Esophagus muscularis mucosa (tissue), 4 donors: ENCODE measurements at regions of chr7 and their contacts with region 1.

Region 1: DNA sequence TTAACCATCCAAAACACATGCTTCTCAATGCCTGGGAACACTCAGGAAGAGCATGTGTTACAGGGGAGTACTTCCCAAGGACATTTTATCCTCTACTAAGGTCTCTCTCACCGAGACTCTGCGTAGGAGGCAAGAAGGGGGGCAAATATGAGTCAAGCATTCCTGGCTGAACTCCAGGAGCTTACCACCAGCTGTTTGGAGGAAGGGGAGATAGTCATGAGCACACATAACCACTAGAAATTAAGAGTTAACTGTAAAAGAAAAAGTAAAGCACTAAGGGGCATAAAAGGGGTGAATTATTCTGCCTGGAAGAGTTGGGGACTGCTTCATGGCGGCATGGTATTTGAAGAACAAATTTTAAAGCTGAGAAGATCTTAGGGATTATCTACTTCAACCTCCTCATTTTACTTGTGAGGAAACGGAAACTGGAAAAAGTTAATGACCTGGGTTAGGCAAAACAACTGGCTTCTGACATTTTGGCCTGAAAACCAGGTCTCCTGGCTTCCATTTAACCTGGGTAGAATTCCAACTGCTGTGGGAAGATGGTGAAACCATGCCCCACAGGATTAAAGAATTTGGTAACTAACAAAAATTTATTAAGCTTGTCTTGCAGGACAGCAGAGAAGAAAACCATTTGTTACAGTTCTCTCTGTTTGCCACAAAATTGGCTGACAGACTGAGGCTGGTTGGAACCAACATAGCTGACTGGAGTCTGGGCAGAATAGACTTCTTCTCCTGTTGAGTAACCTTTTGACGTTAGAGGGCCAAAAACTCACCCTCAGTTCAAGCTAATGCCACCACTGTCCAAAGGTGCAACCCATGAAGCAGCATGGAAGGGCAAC is 85.5 kb downstream of the SLC25A13 start:
- DNase-seq: no peak
- H3K4me3 ChIP-seq: no peak overlapping the region
- H3K27ac ChIP-seq: peak overlapping the region; percentile 43 to 56 (median 52)
- H3K4me1 ChIP-seq: peaks cover 17 to 38% (median 34%) of the 10 kb centered on the region in 4 donors
- H3K27me3 ChIP-seq: no peaks in the 10 kb centered on the region
- CTCF ChIP-seq: no peak
- EP300 ChIP-seq: no peak
- POLR2A ChIP-seq: no peak

Region 2: DNA sequence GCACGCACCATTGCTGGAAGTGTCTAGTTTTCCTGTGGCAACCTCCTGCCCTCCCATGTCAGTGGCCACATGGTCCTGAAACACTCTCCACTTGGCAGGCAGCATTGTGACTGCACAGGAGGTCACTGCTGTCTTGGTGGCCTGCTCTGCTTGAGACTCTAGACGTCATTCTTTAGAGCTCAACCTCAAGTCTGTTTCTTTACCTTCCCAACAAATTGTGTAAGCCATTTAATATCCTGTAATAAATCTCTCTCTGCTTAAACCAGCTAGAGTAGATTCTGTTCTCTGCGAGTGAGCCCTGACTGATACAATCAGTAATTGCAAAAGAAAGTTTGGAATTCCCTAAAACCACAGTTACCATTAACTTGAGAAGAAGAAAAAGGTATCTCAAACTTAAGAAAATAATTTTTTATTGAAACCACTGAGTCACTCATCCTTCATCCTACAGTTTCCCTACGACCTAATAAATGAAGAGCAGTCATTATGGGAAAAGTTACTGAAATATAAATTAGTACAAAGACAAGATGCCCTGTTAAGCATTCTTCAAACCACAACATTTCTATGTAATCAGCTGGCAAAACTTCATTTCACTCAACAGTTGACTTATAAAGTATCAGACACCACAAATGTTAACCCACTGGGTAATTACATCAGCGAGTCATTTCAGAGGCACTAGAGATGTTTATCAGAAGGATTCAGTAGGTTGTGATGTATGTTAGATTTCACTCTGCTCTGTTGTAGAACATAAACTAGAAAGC is 67.4 kb after region 1 on chr7:
- intact Hi-C with region 1: no loop called
- DNase-seq: no peak
- H3K4me3 ChIP-seq: no peak overlapping the region
- H3K27ac ChIP-seq: no peak overlapping the region
- H3K4me1 ChIP-seq: peaks cover 4 to 54% (median 31%) of the 10 kb centered on the region in 4 donors
- H3K27me3 ChIP-seq: no peaks in the 10 kb centered on the region
- CTCF ChIP-seq: no peak
- EP300 ChIP-seq: no peak
- POLR2A ChIP-seq: no peak

Region 3: DNA sequence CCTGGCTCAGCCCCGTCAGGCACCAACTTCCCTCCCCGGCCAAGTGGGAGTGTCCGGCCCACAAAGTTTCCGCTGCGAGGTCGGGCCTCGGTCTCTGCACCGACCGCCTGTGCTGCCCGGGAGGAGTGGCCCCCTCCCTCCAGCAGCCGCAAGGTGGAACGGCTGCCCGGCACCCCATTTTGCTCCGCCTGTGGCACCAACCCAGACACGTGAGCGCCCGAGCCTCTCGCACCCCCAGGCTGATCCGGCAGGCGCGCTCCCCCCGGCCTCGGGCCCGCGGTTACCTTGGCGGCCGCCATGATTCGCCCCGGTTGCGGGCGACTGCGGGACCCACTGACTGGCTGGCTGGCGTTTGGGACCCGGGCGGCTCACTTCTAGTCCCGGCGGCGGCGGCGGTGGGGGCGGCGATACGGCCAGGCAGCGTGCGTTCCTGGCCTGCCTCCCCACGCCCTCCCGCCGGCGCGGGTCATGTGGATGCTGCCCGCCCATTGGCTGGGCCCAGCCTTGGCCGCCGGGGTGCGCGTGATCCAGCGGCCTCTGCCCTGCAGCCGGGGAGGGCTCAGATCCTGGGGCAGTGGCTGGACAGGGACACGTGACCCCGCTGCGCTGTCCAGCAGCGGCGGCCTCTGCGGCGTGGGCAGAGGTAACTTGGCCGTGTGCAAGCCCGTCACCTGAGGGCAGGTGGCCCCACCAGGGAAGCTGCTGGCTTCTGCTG is 85.4 kb after region 1 on chr7 and contains the start of gene SLC25A13:
- intact Hi-C with region 1: loop called (anchors 5 kb)
- DNase-seq: peak; percentile 96
- H3K4me3 ChIP-seq: peak within 1 kb of the TSS; percentile 76 to 92 (median 76)
- H3K27ac ChIP-seq: peak within 1 kb of the TSS; percentile 89 to 97 (median 94)
- H3K4me1 ChIP-seq: peaks cover 25 to 38% (median 32%) of the 10 kb centered on the region in 4 donors
- H3K27me3 ChIP-seq: no peaks in the 10 kb centered on the region
- CTCF ChIP-seq: no peak
- EP300 ChIP-seq: no peak
- POLR2A ChIP-seq: peak; percentile 41
- total RNA-seq, gene SLC25A13: 8.6 to 17.4 (median 14.4) TPM